ENCODE measurements at regions of chr11 and their contacts with region 1.

Region 1: DNA sequence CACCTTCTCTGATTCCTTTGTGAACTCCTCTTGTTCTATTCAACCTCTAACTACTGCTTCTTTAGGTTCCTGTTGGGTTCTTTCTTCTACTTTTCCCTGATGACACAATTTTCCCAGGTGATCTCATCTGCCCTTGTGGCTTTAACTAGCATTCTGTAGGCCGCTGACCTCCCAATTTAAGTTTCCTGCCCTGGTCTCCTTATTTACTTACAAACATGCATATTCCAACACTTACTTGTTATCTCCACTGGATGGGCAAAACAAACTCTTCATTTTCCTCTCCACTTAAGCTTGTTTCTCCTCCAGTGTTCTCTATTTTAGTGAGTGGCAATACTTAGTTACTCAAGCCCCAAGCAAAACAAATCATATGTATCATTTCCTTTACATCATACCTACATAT is 734.5 kb downstream of the METTL15 start:
- DNase-seq: peak; percentile 72
- H3K4me3 ChIP-seq: no peak overlapping the region
- H3K27ac ChIP-seq: peak overlapping the region; percentile 70
- H3K4me1 ChIP-seq: peaks cover 27% of the 10 kb centered on the region
- H3K27me3 ChIP-seq: no peaks in the 10 kb centered on the region
- CTCF ChIP-seq: no peak
- POLR2A ChIP-seq: no peak

Region 2: GRCh38 chr11:28826807-28827206 is 15.9 kb before region 1 on chr11:
- CTCF ChIA-PET with region 1: no interaction called
- POLR2A ChIA-PET with region 1: no interaction called
- dilution Hi-C with region 1: no loop called
- intact Hi-C with region 1: no loop called
- DNase-seq: no peak
- H3K4me3 ChIP-seq: no peak overlapping the region
- H3K27ac ChIP-seq: no peak overlapping the region
- H3K4me1 ChIP-seq: peaks cover under 1% of the 10 kb centered on the region
- H3K27me3 ChIP-seq: no peaks in the 10 kb centered on the region
- CTCF ChIP-seq: no peak
- POLR2A ChIP-seq: no peak

Region 3: DNA sequence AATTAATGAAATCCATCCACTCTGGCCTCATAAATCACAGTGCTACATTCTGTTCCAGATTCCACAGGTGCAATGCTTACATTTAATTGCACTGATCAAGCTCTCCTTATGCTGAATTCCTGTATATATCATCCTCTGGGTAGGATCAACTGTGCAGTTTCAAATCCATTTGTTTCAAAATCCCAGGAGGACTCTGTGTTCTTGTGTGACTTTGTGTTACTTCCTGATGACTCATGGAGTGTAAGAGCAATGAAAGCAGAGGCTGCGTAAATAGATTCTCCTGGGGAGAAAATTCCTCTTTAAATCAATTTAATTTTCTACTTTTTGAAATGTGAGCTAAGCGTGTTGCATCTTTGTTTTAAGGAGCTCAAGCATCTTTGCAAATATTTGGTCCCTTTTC is 18.2 kb after region 1 on chr11:
- CTCF ChIA-PET with region 1: interaction called, 4 read pairs
- POLR2A ChIA-PET with region 1: no interaction called
- dilution Hi-C with region 1: no loop called
- intact Hi-C with region 1: loop called (anchors 2 kb)
- DNase-seq: peak; percentile 77
- H3K4me3 ChIP-seq: no peak overlapping the region
- H3K27ac ChIP-seq: peak overlapping the region; percentile 36
- H3K4me1 ChIP-seq: peaks cover 15% of the 10 kb centered on the region
- H3K27me3 ChIP-seq: no peaks in the 10 kb centered on the region
- CTCF ChIP-seq: no peak
- POLR2A ChIP-seq: no peak

Region 4: DNA sequence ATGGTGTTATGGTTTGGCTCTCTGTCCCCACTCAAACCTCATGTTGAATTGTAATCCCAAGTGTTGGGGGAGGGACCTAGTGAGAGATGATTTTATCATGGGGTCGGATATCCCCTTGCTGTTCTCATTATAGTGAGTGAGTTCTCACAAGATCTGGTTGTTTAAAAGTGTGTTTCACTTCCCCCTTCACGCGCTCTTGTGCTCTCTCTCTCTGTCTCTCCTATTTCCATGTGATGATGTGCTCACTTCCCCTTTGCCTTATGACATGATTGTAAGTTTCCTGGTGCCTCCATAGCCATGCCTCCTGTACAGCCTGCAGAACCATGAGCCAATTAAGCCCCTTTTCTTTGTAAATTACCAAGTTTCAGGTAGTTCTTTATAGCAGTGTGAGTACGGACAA is 409.0 kb after region 1 on chr11:
- CTCF ChIA-PET with region 1: no interaction called
- POLR2A ChIA-PET with region 1: no interaction called
- dilution Hi-C with region 1: no loop called
- intact Hi-C with region 1: no loop called
- DNase-seq: no peak
- H3K4me3 ChIP-seq: no peak overlapping the region
- H3K27ac ChIP-seq: no peak overlapping the region
- H3K4me1 ChIP-seq: no peaks in the 10 kb centered on the region
- H3K27me3 ChIP-seq: no peaks in the 10 kb centered on the region
- CTCF ChIP-seq: no peak
- POLR2A ChIP-seq: no peak

Measured in endothelial cell of umbilical vein (primary cell).